ENCODE measurements at regions of chr3 and their contacts with region 1.

Region 1: GRCh38 chr3:172138795-172139441 is 99.5 kb downstream of the FNDC3B start:
- DNase-seq: peak; percentile 89
- ATAC-seq: peak; percentile 51
- H3K4me3 ChIP-seq: no peak overlapping the region
- H3K27ac ChIP-seq: peak overlapping the region; percentile 80
- H3K4me1 ChIP-seq: peaks cover 73% of the 10 kb centered on the region
- H3K27me3 ChIP-seq: no peaks in the 10 kb centered on the region
- CTCF ChIP-seq: no peak
- EP300 ChIP-seq: peak; percentile 39 to 60; a peak in 2 of 4 replicates
- POLR2A ChIP-seq: no peak
- RAD21 ChIP-seq: peak; percentile 23; the same call in 1 of the 2 replicates

Region 2: DNA sequence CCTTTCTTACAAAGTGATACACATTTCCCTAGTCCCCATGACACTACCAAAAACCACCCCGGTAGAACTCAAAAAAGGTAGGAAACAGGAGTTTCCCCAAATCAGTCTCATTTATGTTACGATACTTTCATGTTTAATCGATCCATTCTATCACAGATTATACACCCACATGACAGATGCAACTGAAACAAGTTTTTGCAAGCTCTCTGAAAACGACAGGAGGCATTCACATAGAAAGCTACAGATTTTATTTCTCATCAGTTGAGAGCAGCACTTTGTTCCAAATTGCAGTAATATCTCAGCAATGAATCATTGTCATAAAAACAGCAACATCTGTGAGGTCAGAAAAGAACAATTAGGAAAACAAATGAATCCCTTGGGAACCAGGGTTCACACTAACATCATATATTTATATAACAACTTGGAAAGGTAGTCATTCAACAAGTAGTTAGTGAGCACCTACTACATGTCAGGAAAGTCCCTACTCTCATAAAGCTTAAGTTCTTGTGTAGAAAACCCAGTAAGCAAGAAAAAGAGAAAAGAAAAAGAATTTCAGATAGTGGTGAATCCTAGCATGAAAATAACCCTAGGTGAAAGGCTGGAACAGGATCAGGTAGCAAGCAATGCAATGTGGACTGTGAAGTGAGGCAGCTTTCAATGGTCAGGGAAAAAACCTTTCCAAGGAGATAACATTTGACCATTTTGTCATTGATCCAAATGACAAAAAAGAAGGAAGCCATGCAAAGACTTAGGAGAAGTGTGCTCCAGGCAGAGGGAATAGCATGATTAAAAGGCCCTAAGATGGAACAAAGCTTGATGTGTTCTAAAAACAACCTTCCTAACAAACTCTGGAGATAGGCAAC is 336.9 kb before region 1 on chr3:
- CTCF ChIA-PET with region 1: no interaction called
- POLR2A ChIA-PET with region 1: no interaction called
- RAD21 ChIA-PET with region 1: interaction called, 5 read pairs
- SMC1A ChIA-PET with region 1: interaction called, 3 read pairs
- in situ Hi-C with region 1: no loop called
- intact Hi-C with region 1: loop called (anchors 5 kb)
- DNase-seq: peak; percentile 70
- ATAC-seq: peak; percentile 25
- H3K4me3 ChIP-seq: no peak overlapping the region
- H3K27ac ChIP-seq: peak overlapping the region; percentile 77
- H3K4me1 ChIP-seq: peaks cover 8% of the 10 kb centered on the region; the same call in 1 of the 2 replicates
- H3K27me3 ChIP-seq: no peaks in the 10 kb centered on the region
- CTCF ChIP-seq: no peak
- EP300 ChIP-seq: peak; percentile 59 to 78; a peak in 2 of 4 replicates
- POLR2A ChIP-seq: no peak
- RAD21 ChIP-seq: no peak

Region 3: DNA sequence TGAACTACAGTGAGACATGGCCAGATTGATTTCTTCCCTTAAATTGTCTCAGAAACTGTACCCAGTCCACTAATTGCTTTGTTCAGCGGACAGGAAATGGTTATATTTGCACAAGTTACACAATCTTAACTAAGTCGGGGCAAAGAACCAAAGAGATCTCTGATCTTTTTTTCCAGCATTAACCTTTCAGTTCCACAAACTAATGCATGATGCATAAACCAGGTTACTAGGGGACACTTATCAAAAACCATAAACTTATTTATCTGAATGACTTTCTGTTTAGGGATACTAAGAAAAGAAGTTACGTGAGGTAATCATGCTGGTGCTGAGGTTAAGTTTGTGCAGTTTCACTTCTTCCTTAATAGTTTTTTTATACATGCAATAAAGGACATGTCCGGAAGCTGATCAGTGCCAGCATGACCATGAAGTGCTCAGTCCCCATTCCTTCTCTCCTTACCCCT is 77.2 kb before region 1 on chr3:
- CTCF ChIA-PET with region 1: no interaction called
- POLR2A ChIA-PET with region 1: interaction called, 4 read pairs
- RAD21 ChIA-PET with region 1: interaction called, 8 read pairs
- SMC1A ChIA-PET with region 1: interaction called, 5 read pairs
- in situ Hi-C with region 1: no loop called
- intact Hi-C with region 1: loop called (anchors 5 kb)
- DNase-seq: peak; percentile 84
- ATAC-seq: peak; percentile 90
- H3K4me3 ChIP-seq: peak overlapping the region; percentile 9; the same call in 1 of the 2 replicates
- H3K27ac ChIP-seq: peak overlapping the region; percentile 76
- H3K4me1 ChIP-seq: peaks cover 19% of the 10 kb centered on the region
- H3K27me3 ChIP-seq: no peaks in the 10 kb centered on the region
- CTCF ChIP-seq: no peak
- EP300 ChIP-seq: peak; percentile 85 to 89
- POLR2A ChIP-seq: no peak
- RAD21 ChIP-seq: no peak

Region 4: DNA sequence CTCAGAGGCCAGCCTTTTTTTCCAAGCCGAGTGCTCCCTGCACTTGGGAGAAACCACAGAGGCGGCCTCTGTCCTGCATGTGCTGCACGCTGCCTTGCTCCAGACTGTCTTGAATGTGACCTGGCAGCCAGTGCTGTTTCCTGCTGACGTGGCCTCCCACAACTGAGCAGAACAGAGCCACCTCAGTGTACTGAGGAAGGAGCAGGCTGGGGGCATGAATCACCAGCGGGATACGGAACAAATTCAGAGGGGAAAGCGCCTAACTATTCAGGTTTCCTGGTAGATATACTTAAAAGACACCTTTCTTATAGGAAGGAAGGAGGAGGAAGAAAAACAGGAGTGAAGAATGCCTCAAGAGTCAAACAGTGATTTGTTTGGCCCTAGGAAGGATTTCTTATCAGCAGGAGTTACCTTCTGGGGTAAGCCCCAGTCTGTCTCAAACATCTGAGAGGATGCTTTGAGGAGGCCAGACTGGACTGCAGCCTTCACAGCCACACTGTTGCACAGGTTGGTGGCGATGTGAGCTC is 14.5 kb after region 1 on chr3:
- CTCF ChIA-PET with region 1: interaction called, 7 read pairs
- POLR2A ChIA-PET with region 1: interaction called, 54 read pairs
- RAD21 ChIA-PET with region 1: interaction called, 71 read pairs
- SMC1A ChIA-PET with region 1: interaction called, 254 read pairs
- in situ Hi-C with region 1: no loop called
- intact Hi-C with region 1: no loop called
- DNase-seq: no peak
- ATAC-seq: peak; percentile 72
- H3K4me3 ChIP-seq: peak overlapping the region; percentile 22; the same call in 1 of the 2 replicates
- H3K27ac ChIP-seq: peak overlapping the region; percentile 78
- H3K4me1 ChIP-seq: peaks cover 25% of the 10 kb centered on the region
- H3K27me3 ChIP-seq: no peaks in the 10 kb centered on the region
- CTCF ChIP-seq: no peak
- EP300 ChIP-seq: no peak
- POLR2A ChIP-seq: no peak; the same call in 1 of the 2 replicates
- RAD21 ChIP-seq: no peak

Region 5: DNA sequence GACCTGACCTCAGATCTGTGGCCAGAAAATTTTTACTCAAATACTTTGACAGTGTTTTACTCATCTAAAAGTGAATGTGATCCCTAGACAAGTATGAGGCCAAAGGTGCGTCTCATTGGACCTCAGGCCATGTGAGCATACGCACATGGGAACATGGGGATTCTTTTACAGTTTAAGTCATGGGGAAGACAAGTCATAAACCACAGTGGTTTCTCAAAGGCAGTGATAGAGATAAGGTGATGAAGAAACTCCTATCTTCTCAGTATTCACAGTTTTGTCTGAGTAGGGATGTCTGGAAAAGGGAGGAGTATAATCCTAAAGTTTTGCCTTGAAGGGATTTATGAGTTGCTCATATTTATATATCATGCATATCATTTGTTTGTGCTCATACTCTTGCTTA is 74.3 kb after region 1 on chr3:
- CTCF ChIA-PET with region 1: interaction called, 3 read pairs
- POLR2A ChIA-PET with region 1: interaction called, 5 read pairs
- RAD21 ChIA-PET with region 1: interaction called, 5 read pairs
- SMC1A ChIA-PET with region 1: interaction called, 12 read pairs
- in situ Hi-C with region 1: no loop called
- intact Hi-C with region 1: no loop called
- DNase-seq: peak; percentile 49
- ATAC-seq: peak; percentile 82
- H3K4me3 ChIP-seq: 0 out of 2 replicates have a peak overlapping the region, but pooled peaks have one; percentile 20
- H3K27ac ChIP-seq: peak overlapping the region; percentile 80
- H3K4me1 ChIP-seq: peaks cover 24% of the 10 kb centered on the region
- H3K27me3 ChIP-seq: no peaks in the 10 kb centered on the region
- CTCF ChIP-seq: no peak
- EP300 ChIP-seq: peak; percentile 48 to 81; a peak in 3 of 4 replicates
- POLR2A ChIP-seq: no peak
- RAD21 ChIP-seq: 0 out of 2 replicates have a peak, but pooled peaks have one; percentile 1